ENCODE measurements at regions of chr15 and their contacts with region 1.

Region 1: GRCh38 chr15:25438601-25439368 is at the start of gene UBE3A:
- DNase-seq: peak; percentile 94
- ATAC-seq: peak; percentile 94
- H3K4me3 Mint-ChIP-seq: peak within 1 kb of the TSS; percentile 90
- H3K27ac Mint-ChIP-seq: peak within 1 kb of the TSS; percentile 94
- H3K4me1 Mint-ChIP-seq: peaks cover 30% of the 10 kb centered on the region
- H3K27me3 Mint-ChIP-seq: no peaks in the 10 kb centered on the region
- total RNA-seq, gene UBE3A: 101 to 139 TPM

Region 2: DNA sequence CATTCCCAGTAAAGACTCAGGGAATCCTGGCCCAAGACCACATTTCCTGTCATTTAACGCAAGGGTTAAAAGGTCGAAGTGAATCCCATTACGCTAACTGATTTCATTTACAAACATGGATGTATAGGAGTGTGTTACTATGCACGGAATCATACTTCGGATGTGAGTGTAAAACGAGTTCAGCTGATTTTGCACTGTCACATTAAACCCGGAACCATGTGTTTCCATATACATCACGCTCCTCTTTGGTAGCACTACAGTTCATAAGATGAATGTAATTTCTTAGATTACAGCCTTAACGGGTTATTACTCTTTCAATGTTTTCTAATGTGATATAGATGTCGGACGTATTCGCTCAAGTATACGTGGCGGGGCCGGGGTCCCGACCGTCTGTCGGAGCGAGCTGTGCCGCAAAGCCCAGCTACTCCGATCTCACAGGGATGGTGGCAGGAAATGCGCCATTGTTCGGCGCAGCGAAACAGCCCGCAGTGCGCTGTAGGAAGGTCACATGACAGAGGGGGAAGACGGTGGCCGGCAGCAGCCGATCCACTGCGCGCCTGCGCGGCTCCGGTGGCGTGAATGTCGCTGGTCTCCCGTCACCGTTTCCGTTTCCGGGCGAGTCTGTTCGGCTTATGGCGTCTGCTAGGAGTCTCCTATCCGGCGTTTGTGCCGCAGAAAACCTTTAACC is 666.0 kb before region 1 on chr15:
- CTCF ChIA-PET with region 1: no interaction called
- POLR2A ChIA-PET with region 1: no interaction called
- intact Hi-C with region 1: loop called in 1 of 2 experiments (anchors 1 kb)
- DNase-seq: peak; percentile 84
- ATAC-seq: peak; percentile 92
- H3K4me3 Mint-ChIP-seq: peak overlapping the region; percentile 73
- H3K27ac Mint-ChIP-seq: peak overlapping the region; percentile 88
- H3K4me1 Mint-ChIP-seq: peaks cover 3% of the 10 kb centered on the region
- H3K27me3 Mint-ChIP-seq: peaks cover 9% of the 10 kb centered on the region

Region 3: DNA sequence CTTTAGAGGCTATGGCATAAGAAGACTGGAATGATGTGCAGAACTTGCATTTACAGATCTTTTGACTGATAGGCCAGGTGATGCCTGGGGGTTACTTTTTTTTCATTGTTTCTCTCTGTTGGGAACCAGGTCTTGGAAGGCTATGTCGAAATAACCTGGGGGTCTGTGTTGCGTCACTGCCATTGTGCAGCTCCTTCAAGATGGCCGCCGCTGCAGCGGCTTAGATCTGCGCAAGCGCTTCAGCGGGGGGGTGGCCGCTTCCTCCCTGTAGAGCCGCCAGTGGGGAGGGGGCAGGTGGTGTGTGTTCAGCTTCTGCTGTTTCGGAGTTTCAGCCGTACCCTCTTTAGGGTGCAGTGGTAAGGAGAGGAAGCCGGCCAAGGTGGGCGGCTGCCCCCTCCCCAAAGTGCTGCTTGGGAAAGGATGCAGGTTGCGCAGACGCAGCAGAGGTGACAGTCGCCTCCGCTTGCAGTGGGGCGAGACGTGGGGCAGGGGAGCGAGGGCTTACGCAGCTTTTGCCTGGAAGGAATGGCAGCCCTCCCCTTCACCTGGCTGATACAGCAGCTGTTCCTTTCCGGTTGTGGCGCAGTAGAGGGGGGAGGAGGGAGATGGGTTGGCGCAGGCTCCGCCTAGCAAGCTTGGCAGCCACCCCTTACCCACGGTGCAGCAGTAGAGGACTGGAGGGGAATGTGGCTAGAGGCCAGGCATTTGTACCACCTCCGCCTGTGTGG is 482.5 kb before region 1 on chr15:
- CTCF ChIA-PET with region 1: no interaction called
- POLR2A ChIA-PET with region 1: no interaction called
- intact Hi-C with region 1: loop called (anchors 1 kb)
- DNase-seq: peak; percentile 88
- ATAC-seq: peak; percentile 83
- H3K4me3 Mint-ChIP-seq: peak overlapping the region; percentile 91
- H3K27ac Mint-ChIP-seq: peak overlapping the region; percentile 94
- H3K4me1 Mint-ChIP-seq: peaks cover 11% of the 10 kb centered on the region
- H3K27me3 Mint-ChIP-seq: no peaks in the 10 kb centered on the region

Region 4: DNA sequence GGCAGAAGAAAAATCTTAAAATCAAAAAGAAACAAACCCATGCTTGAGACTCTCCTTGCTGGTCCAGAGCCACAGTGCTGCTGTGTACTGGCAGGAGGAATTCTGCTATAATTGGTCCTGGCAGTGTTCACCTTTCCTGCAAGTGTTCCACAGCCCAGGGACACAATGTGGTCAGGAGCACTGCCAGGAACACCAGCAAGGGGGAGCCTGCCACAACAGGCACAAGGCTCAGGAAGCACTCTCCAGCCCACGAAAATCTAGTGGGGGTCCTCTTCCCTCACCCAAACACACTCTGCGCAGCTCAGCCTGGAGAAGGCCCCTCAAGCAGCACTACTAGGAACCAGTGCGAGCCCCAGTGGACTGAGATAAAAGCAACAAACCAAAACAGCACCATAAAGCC is 92.8 kb before region 1 on chr15:
- CTCF ChIA-PET with region 1: no interaction called
- POLR2A ChIA-PET with region 1: no interaction called
- intact Hi-C with region 1: loop called in 1 of 2 experiments (anchors 5 kb)
- DNase-seq: no peak
- ATAC-seq: no peak
- H3K4me3 Mint-ChIP-seq: no peak overlapping the region
- H3K27ac Mint-ChIP-seq: no peak overlapping the region
- H3K4me1 Mint-ChIP-seq: peaks cover 5% of the 10 kb centered on the region
- H3K27me3 Mint-ChIP-seq: no peaks in the 10 kb centered on the region

Region 5: GRCh38 chr15:25378501-25378901 is 60.3 kb before region 1 on chr15:
- CTCF ChIA-PET with region 1: no interaction called
- POLR2A ChIA-PET with region 1: no interaction called
- intact Hi-C with region 1: no loop called
- DNase-seq: no peak
- ATAC-seq: peak; percentile 83
- H3K4me3 Mint-ChIP-seq: no peak overlapping the region
- H3K27ac Mint-ChIP-seq: no peak overlapping the region
- H3K4me1 Mint-ChIP-seq: peaks cover 38% of the 10 kb centered on the region
- H3K27me3 Mint-ChIP-seq: no peaks in the 10 kb centered on the region

Region 6: GRCh38 chr15:25408428-25408827 is 30.4 kb before region 1 on chr15:
- CTCF ChIA-PET with region 1: no interaction called
- POLR2A ChIA-PET with region 1: no interaction called
- intact Hi-C with region 1: loop called in 1 of 2 experiments (anchors 2 kb)
- DNase-seq: no peak
- ATAC-seq: no peak
- H3K4me3 Mint-ChIP-seq: no peak overlapping the region
- H3K27ac Mint-ChIP-seq: no peak overlapping the region
- H3K4me1 Mint-ChIP-seq: peaks cover 37% of the 10 kb centered on the region
- H3K27me3 Mint-ChIP-seq: no peaks in the 10 kb centered on the region

Region 7: GRCh38 chr15:25863111-25863967 is 424.6 kb after region 1 on chr15 and contains the start of gene ATP10A:
- CTCF ChIA-PET with region 1: no interaction called
- POLR2A ChIA-PET with region 1: no interaction called
- intact Hi-C with region 1: loop called in 1 of 2 experiments (anchors 5 kb)
- DNase-seq: peak; percentile 72
- ATAC-seq: peak; percentile 19
- H3K4me3 Mint-ChIP-seq: peak within 1 kb of the TSS; percentile 92
- H3K27ac Mint-ChIP-seq: peak within 1 kb of the TSS; percentile 93
- H3K4me1 Mint-ChIP-seq: peaks cover 33% of the 10 kb centered on the region
- H3K27me3 Mint-ChIP-seq: no peaks in the 10 kb centered on the region
- total RNA-seq, gene ATP10A: 20.5 to 22.4 TPM

Region 8: DNA sequence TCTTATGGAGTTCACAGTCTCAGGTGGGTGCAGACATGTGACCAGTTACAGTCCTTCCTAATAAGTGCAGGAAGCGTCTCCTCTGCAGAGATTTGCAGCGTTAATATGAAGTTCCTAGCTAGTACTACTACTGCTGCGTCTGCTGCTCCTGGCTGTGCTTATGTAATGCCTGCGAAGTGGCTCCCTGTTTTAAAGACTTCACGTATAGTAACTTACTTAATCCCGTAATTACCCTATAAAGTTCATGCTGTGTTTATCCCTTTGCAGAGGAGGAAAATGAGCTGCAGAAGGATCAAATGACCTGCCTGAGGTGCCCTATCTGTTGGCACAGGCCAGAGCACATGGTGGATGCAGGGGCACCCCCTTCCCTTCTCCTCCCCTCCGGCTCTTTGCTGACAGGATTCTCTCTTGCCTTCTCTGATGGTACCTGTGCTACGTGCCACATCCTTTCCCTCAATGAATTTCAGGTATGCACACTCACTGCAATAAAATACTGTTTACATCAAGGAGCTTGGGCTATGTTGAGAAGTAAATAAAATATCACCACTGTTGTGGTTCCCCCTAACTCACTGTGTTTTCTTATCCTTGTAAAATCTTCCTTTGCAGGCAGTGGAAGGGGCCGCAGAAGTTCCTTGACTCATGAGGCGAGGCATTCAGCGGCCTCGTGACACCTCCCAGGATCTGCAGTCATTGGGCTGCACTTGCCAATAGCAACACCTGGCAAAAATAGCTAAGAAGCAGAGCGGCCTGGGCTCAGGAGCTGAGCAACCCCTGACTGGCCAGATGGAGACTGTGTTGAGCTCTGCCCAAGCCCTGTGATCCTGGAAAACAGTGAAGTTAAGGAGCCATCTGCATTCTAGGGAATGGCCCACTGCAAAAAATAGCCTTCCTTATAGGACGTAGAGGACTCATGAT is 613.2 kb after region 1 on chr15:
- CTCF ChIA-PET with region 1: no interaction called
- POLR2A ChIA-PET with region 1: no interaction called
- intact Hi-C with region 1: no loop called
- DNase-seq: no peak
- ATAC-seq: no peak
- H3K4me3 Mint-ChIP-seq: no peak overlapping the region
- H3K27ac Mint-ChIP-seq: no peak overlapping the region
- H3K4me1 Mint-ChIP-seq: no peaks in the 10 kb centered on the region
- H3K27me3 Mint-ChIP-seq: peaks cover 9% of the 10 kb centered on the region

Region 9: DNA sequence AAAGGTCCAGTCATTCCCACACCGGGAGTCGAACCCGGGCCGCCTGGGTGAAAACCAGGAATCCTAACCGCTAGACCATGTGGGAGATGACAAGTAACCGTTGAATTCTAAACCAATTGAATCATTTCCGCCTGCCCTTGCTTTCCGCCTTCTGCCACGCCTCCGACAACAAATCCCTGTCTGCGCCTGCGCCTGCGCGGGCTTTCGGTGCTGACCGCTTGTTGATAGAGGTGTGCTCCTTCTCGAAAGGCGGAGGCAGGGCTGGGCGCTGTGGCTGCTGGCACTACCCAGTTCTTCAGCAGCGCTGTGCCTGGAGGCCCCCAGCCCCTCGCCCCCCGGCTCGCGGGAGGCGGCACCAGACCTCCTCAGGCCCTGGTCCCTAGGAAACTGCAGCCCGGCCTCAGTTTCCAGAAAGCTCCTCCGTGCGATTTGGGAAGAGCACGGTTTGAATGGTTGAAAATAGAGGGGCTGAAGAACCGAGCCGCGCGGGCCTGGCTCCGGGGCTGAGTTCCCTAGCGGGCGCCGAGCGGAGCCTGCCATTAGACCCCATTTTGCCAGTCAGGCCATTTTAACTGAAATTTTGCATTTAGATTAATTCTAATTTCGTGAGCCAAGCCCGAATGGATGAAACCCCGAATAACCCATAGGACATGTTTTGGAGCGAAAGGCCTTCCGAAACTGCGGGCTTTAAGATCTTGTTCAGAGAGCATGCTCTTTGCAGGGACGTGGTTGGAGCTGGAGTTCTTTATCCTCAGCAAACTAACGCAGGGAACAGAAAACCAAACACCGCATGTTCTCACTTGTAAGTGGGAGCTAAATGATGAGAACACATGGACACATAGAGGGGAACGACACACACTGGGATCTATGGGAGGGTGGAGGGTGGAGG is 643.7 kb after region 1 on chr15:
- CTCF ChIA-PET with region 1: no interaction called
- POLR2A ChIA-PET with region 1: interaction called, 5 read pairs
- intact Hi-C with region 1: loop called in 1 of 2 experiments (anchors 1 kb)
- DNase-seq: peak; percentile 97
- ATAC-seq: peak; percentile 99
- H3K4me3 Mint-ChIP-seq: peak overlapping the region; percentile 84
- H3K27ac Mint-ChIP-seq: peak overlapping the region; percentile 95
- H3K4me1 Mint-ChIP-seq: peaks cover 32% of the 10 kb centered on the region
- H3K27me3 Mint-ChIP-seq: no peaks in the 10 kb centered on the region